Left cardiac atrium (tissue), 4 donors: ENCODE measurements at regions of chr10 and their contacts with region 1.

Region 1: DNA sequence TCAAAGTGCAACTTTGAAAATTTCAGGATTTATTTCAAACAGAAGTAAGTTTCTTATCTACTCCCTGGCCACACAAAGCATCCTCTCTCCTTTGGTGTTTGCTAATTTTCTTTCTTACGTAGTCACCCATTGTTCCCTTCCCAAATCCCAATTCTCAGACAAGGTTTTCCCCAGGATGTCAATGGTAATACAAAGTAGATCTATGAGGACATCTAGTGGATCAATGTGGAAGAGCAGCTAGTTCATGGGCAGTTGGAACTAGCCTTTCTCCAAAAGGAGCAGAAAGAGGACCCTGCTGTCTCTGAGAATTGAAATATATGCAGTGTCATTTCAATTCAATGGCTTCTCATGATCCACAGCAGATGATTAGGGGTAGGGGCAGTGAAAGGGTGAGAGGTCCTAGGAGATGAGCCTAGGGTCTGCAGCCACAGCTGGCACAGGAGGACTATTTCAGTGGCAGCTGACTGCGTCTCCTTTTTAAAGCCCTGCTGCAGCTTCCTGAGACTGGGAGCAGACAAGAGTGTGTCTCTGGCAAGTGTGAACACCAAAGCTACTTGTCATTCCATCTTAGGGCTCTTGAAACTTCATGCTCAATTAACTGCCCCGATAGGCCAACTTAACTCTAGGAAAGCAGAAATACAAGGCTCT is 632.6 kb downstream of the KCNMA1 start:
- DNase-seq: no peak
- ATAC-seq: peak; percentile 57 to 71

Region 2: DNA sequence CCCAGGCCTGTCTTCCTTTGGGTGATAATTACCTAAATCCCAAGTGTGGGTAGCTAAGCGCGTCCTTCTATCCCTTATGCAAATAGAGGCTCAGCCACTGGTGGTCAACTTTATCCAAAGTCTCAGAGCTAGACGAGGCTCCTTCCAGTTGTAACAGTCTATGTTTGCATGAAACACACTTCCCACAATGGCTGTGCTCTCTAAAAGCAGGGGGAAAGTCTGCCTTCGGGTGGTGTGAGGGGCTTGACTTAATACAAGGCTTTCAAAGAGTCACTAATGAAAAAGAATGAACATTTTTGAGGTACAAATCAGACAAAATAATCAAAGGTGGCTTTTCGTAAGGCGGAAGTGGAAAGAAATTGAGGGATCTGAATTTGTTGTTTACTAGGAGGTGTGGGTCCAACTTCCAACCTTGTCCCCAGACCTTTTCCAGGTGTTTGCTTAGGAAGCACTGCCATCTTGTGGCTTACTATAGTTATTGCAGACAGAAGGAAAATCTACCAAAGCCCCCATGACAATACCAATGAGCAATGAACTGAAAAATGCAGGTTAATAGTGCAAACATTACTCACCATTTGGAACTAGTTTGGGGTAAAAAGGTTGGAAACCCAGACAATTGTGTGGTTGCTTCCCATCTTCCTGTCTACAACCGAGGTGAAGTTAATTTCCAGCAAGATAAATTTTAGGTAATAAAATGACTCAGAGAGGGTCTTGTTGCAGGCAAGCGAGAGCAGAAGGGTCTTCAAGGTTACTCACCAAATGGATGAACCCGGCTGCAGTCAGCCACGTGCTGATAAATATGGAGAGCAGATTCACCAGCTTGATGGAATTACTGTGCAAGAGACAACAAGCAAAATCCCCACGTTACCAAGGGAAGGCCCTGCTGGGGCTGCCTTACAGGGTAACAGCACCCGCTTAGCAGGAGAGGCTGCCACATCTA is 106.8 kb after region 1 on chr10:
- intact Hi-C with region 1: loop called in 1 of 2 experiments (anchors 5 kb)
- DNase-seq: no peak
- ATAC-seq: peak; percentile 68 to 71

Region 3: DNA sequence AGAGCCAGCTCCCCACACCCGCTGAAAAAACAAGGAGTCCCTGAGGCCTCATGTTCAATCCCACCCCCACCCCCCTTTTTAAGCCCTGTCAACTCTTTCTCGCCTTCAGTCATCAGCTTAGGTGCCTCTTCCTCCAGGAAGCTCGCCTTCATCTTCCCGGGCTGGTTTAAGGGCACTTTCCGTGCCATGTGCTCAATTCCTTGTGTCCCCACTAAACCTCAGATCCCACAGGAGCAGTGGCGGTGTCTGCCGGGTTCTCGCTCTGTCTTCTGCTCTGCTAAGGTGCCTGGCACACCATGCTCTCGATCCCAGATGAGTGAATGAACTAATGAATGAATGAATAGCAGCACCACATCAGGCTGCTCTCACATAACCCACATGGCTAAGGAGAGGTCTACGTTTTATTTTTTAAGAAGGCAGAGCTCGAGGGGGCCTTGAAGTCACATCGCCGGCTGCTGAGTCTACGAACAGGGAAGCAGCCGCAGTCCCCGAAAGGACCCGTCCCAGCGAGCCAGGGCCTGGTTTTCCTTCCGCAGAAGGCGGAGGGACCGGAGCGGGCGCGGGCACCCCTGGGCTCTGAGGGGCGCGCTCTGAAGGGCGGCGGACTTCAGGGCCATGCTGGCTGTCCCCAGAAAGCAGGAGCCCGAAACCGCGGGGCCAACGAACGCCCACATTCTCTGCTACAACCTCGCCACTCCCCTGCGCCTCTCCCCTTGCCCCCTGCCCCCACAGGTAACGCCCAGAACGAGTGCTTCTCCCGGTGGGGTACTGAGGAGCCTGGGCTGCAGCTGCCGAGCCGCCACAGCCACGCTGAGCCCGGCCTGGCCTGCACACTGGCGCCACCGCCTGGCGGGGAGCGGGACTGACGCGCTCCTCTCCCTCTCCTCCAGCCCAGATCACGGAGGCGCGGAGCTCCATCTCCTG is 706.0 kb after region 1 on chr10:
- intact Hi-C with region 1: no loop called
- DNase-seq: peak; percentile 76
- ATAC-seq: peak; percentile 93 to 98